ENCODE measurements at regions of chr22 and their contacts with region 1.

Region 1: GRCh38 chr22:43812149-43812842 is at the start of gene EFCAB6:
- DNase-seq: peak; percentile 94
- ATAC-seq: peak; percentile 95
- H3K4me3 ChIP-seq: peak within 1 kb of the TSS; percentile 39 to 92 (median 77)
- H3K4me3 Mint-ChIP-seq: peak within 1 kb of the TSS; percentile 94
- H3K27ac ChIP-seq: peak within 1 kb of the TSS; percentile 35 to 86
- H3K27ac Mint-ChIP-seq: peak within 1 kb of the TSS; percentile 85
- H3K4me1 ChIP-seq: peaks cover 12 to 17% of the 10 kb centered on the region in 2 donors
- H3K4me1 Mint-ChIP-seq: peaks cover 28% of the 10 kb centered on the region
- H3K27me3 ChIP-seq: no peaks in the 10 kb centered on the region
- H3K27me3 Mint-ChIP-seq: peaks cover 5% of the 10 kb centered on the region
- CTCF ChIP-seq: no peak
- total RNA-seq, gene EFCAB6: 0.07 and 0.39 TPM in 2 replicates

Region 2: DNA sequence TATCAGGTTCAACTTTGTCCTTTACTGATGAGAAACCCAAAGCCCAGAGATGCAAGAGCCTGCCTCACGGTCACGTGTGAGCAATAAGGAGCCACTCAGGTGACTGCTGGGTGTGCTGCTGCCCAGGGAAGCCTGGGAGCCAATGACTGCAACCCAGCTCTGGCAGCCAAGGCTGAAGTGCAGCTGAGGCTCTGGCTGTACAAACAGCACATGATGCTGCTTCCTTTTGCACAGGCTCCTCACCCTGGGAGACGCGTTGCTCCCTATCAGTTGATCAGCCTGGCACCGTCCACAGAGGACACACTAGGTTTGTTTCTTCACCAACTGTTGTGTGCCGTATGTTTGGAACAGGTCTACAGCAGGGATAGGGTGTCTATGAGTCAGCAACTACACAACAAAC is 168.9 kb before region 1 on chr22:
- CTCF ChIA-PET with region 1: no interaction called
- POLR2A ChIA-PET with region 1: no interaction called
- intact Hi-C with region 1: no loop called
- DNase-seq: no peak
- ATAC-seq: no peak
- H3K4me3 ChIP-seq: no peak overlapping the region
- H3K4me3 Mint-ChIP-seq: no peak overlapping the region
- H3K27ac ChIP-seq: no peak overlapping the region
- H3K27ac Mint-ChIP-seq: no peak overlapping the region
- H3K4me1 ChIP-seq: no peaks in the 10 kb centered on the region
- H3K4me1 Mint-ChIP-seq: no peaks in the 10 kb centered on the region
- H3K27me3 ChIP-seq: peaks cover 0 to 8% (median 0%) of the 10 kb centered on the region in 4 experiments
- H3K27me3 Mint-ChIP-seq: peaks cover 32% of the 10 kb centered on the region
- CTCF ChIP-seq: no peak

Region 3: DNA sequence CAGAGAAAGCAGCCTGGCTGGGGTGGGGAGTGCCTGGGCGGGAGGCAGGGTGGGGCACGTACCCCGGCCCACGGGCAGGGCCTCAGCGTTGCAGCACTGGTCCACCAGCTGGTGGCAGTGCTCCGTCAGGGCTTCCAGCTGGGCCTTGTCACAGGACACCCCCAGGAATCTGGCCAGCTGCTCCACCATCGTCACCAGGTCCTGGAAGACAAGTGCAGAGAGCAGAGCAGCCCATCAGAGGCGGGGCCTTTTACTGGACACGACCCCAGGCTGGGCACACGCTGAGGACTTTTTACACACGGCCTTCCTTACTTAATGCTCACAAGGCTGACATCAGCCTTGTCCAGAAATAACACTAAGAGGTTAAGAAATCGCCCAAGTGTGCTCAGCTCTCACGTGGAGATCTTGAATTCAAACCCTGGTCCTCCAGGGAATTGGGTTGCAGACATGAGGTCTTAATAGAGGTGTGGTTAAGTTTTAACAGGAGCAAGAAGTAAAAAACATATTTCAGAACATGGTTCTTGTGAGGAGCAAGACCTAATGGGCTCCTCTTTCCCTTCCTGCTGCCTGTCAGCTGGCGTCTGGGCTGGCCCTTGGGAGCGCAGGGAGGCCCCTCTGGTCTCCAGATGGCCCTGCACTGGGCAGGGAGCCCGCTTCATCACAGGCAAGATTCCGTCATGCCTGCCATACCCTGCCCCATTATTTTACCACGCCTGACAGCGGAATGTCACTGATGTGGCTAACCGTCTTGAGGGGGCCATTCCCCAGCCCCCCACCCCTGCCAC is 16.9 kb after region 1 on chr22:
- CTCF ChIA-PET with region 1: no interaction called
- POLR2A ChIA-PET with region 1: no interaction called
- intact Hi-C with region 1: no loop called
- DNase-seq: no peak
- ATAC-seq: no peak
- H3K4me3 ChIP-seq: no peak overlapping the region
- H3K4me3 Mint-ChIP-seq: no peak overlapping the region
- H3K27ac ChIP-seq: no peak overlapping the region
- H3K27ac Mint-ChIP-seq: no peak overlapping the region
- H3K4me1 ChIP-seq: no peaks in the 10 kb centered on the region
- H3K4me1 Mint-ChIP-seq: no peaks in the 10 kb centered on the region
- H3K27me3 ChIP-seq: no peaks in the 10 kb centered on the region
- H3K27me3 Mint-ChIP-seq: peaks cover 12% of the 10 kb centered on the region
- CTCF ChIP-seq: no peak

Region 4: GRCh38 chr22:44497218-44497904 is 685.1 kb after region 1 on chr22:
- CTCF ChIA-PET with region 1: no interaction called
- POLR2A ChIA-PET with region 1: no interaction called
- intact Hi-C with region 1: loop called (anchors 5 kb)
- DNase-seq: no peak
- ATAC-seq: no peak
- H3K4me3 ChIP-seq: peak overlapping the region in 4 of 5 experiments; percentile 19 to 68 (median 52)
- H3K4me3 Mint-ChIP-seq: peak overlapping the region; percentile 83
- H3K27ac ChIP-seq: peak overlapping the region in 1 of 2 donors; percentile 70
- H3K27ac Mint-ChIP-seq: peak overlapping the region; percentile 50
- H3K4me1 ChIP-seq: peaks cover 8 to 9% of the 10 kb centered on the region in 2 donors
- H3K4me1 Mint-ChIP-seq: peaks cover 8% of the 10 kb centered on the region
- H3K27me3 ChIP-seq: peaks cover 0 to 17% (median 7%) of the 10 kb centered on the region in 4 experiments
- H3K27me3 Mint-ChIP-seq: peaks cover 6% of the 10 kb centered on the region
- CTCF ChIP-seq: no peak